ENCODE measurements at regions of chr9 and their contacts with region 1.

Region 1: DNA sequence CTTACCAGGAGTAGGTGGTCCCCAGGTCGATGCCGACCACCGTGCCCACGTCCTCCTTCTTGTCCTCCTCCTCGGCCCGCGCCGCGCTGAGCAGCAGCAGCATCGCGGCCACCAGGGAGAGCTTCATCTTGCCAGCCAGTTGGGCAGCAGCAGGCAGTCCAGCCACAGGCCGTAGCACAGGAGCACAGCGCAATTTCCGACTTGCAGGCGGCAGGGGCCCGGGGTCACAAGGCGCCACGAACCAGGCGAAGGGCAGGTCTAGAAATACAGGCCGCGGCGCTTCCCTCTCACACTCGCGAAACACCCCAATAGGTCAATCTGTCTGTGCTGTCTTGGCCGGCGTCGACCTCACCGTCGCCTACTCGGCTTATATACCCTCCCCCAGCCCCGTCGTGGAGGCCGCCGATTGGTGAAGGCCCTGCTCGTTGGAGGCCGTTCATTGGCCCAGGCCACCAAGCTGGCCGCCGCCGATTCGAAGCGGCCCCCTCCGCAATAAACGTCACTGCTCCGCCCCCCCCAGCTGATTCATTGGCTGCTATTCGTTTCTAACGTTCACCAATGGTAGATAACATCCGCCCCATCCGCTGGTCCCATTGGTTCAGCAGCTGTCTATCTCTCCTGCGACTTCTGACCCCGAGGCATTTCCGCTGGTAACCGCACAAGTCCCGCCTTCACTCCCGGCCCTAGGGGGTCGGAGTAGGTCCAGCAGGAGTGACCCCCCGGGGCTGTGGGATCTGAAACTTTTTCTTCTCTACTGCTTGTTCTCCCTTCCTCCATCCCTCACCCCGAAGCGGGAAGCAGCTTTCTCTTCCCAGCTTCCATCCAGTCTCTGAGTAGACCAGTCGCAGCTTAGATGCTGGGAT is at the start of gene HSPA5:
- DNase-seq: peak; percentile 99
- ATAC-seq: peak; percentile 91 to 95
- H3K4me3 ChIP-seq: peak within 1 kb of the TSS; percentile 73
- H3K27ac ChIP-seq: peak within 1 kb of the TSS; percentile 92 to 98
- H3K4me1 ChIP-seq: peaks cover 57% of the 10 kb centered on the region
- CTCF ChIP-seq: no peak
- EP300 ChIP-seq: no peak
- POLR2A ChIP-seq: peak; percentile 99
- RAD21 ChIP-seq: no peak
- polyA plus RNA-seq, gene HSPA5: 437 and 557 TPM in 2 replicates

Region 2: GRCh38 chr9:124861342-124862229 is 379.6 kb before region 1 on chr9 and contains the starts of genes ARPC5L and RPL35:
- CTCF ChIA-PET with region 1: no interaction called
- POLR2A ChIA-PET with region 1: interaction called, 11 read pairs
- DNase-seq: peak; percentile 94 to 95
- ATAC-seq: peak; percentile 92 to 94
- H3K4me3 ChIP-seq: peak within 1 kb of the TSS; percentile 85
- H3K27ac ChIP-seq: peak within 1 kb of the TSS; percentile 89 to 93
- H3K4me1 ChIP-seq: peaks cover 48% of the 10 kb centered on the region
- CTCF ChIP-seq: no peak
- EP300 ChIP-seq: no peak
- POLR2A ChIP-seq: peak; percentile 86
- RAD21 ChIP-seq: no peak
- polyA plus RNA-seq, gene ARPC5L: 44.9 and 62.8 TPM in 2 replicates
- polyA plus RNA-seq, gene RPL35: 3,076 and 3,452 TPM in 2 replicates

Region 3: GRCh38 chr9:125003332-125003731 is 237.9 kb before region 1 on chr9:
- CTCF ChIA-PET with region 1: no interaction called
- POLR2A ChIA-PET with region 1: no interaction called
- DNase-seq: no peak
- ATAC-seq: no peak
- H3K4me3 ChIP-seq: no peak overlapping the region
- H3K27ac ChIP-seq: no peak overlapping the region
- H3K4me1 ChIP-seq: no peaks in the 10 kb centered on the region
- CTCF ChIP-seq: no peak
- EP300 ChIP-seq: no peak
- POLR2A ChIP-seq: no peak
- RAD21 ChIP-seq: no peak

Region 4: GRCh38 chr9:125218621-125219020 is 22.6 kb before region 1 on chr9:
- CTCF ChIA-PET with region 1: no interaction called
- POLR2A ChIA-PET with region 1: interaction called, 11 read pairs
- DNase-seq: no peak
- ATAC-seq: no peak
- H3K4me3 ChIP-seq: no peak overlapping the region
- H3K27ac ChIP-seq: no peak overlapping the region
- H3K4me1 ChIP-seq: no peaks in the 10 kb centered on the region
- CTCF ChIP-seq: no peak
- EP300 ChIP-seq: no peak
- POLR2A ChIP-seq: no peak
- RAD21 ChIP-seq: no peak

Region 5: GRCh38 chr9:125255781-125256391 is 14.7 kb after region 1 on chr9:
- CTCF ChIA-PET with region 1: interaction called, 9 read pairs
- POLR2A ChIA-PET with region 1: interaction called, 38 read pairs
- DNase-seq: peak; percentile 39 to 40
- ATAC-seq: peak; percentile 77 to 90; a peak in 5 of 6 replicates
- H3K4me3 ChIP-seq: no peak overlapping the region
- H3K27ac ChIP-seq: no peak overlapping the region
- H3K4me1 ChIP-seq: peaks cover 3% of the 10 kb centered on the region; the same call in 1 of the 3 replicates
- CTCF ChIP-seq: peak; percentile 60
- EP300 ChIP-seq: no peak
- POLR2A ChIP-seq: no peak
- RAD21 ChIP-seq: peak; percentile 77 to 87

Region 6: GRCh38 chr9:125268394-125269013 is 27.3 kb after region 1 on chr9:
- CTCF ChIA-PET with region 1: interaction called, 3 read pairs
- POLR2A ChIA-PET with region 1: interaction called, 10 read pairs
- DNase-seq: no peak
- ATAC-seq: no peak
- H3K4me3 ChIP-seq: no peak overlapping the region
- H3K27ac ChIP-seq: no peak overlapping the region
- H3K4me1 ChIP-seq: peaks cover 18% of the 10 kb centered on the region
- CTCF ChIP-seq: no peak
- EP300 ChIP-seq: no peak
- POLR2A ChIP-seq: no peak
- RAD21 ChIP-seq: no peak

Region 7: DNA sequence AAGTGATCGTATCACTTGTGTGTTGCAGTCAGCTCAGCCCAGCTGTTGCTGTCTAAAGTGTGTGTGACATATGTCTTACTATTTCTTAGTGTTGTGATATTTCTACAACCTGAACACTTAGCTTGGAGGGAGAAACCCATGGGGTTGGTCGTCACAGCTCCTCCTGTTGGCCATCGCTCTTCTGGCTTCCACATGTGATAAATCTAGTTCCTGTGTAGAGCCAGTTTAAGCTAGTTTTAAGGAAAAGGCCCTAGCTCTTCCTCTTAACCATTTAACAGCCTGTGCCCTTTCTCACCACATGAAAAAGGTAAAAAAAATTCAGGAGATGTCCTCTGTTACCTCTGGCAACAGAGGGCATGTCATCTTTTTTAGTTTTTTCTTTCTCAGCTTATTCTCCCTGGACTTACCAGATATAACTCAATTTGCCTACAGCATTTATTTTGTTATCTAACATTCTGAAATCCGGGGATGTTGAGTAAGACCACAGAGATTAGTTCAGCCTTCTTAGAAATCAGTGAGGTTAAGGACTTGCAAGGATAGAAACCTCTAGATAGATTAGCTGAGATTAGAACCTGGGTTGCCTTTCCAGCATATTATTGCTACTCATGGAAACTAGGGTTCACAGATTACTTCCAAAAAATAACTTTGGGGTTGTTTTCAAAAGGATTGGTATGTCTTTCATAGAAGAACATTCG is 120.8 kb after region 1 on chr9:
- CTCF ChIA-PET with region 1: interaction called, 3 read pairs
- POLR2A ChIA-PET with region 1: interaction called, 11 read pairs
- DNase-seq: peak in 1 of 2 experiments; percentile 51
- ATAC-seq: peak; percentile 50 to 75; a peak in 5 of 6 replicates
- H3K4me3 ChIP-seq: no peak overlapping the region
- H3K27ac ChIP-seq: no peak overlapping the region
- H3K4me1 ChIP-seq: no peaks in the 10 kb centered on the region
- CTCF ChIP-seq: peak; percentile 22; the same call in 1 of the 3 replicates
- EP300 ChIP-seq: no peak
- POLR2A ChIP-seq: no peak
- RAD21 ChIP-seq: peak in 1 of 2 experiments; percentile 26; a peak in 1 of 5 replicates